ENCODE measurements at regions of chr4 and their contacts with region 1.

Region 1: GRCh38 chr4:102586644-102587021 is 85.5 kb downstream of the NFKB1 start:
- DNase-seq: peak; percentile 60
- H3K4me3 Mint-ChIP-seq: no peak overlapping the region
- H3K27ac Mint-ChIP-seq: peak overlapping the region; percentile 83
- H3K4me1 Mint-ChIP-seq: peaks cover 84% of the 10 kb centered on the region
- H3K27me3 Mint-ChIP-seq: no peaks in the 10 kb centered on the region

Region 2: DNA sequence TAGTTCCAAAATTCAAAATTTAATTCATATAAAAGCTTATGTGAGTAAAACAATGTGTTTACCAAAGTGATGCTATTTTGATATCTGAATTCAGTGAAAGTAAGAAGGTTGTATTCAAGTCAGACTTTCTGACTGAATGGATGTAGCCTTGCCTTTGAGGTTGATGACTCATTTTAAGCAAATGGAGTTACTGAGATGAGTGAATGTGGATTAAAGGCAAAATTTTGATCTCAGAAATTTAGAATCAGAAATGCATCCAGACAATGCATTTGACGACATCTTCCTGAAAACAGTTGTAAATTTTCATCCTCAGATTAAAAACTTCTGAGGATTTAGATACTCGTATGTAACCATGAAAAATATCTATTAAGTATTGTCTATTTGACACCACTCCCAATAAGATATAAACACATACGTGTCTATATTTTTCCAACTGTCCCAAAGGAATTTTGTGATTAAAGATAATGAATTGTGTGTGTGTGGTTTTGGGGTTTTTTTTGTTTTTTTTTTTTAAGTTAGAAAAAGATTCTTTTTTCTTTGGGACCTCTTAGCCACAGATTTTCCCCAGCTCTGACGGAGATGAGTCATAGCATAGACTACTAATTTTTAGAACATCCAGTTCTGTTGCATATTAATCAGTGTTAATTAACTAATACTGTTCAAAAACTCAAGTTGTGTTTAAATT is 51.1 kb before region 1 on chr4:
- CTCF ChIA-PET with region 1: no interaction called
- POLR2A ChIA-PET with region 1: no interaction called
- intact Hi-C with region 1: loop called (anchors 2 kb)
- DNase-seq: no peak
- H3K4me3 Mint-ChIP-seq: no peak overlapping the region
- H3K27ac Mint-ChIP-seq: no peak overlapping the region
- H3K4me1 Mint-ChIP-seq: peaks cover 53% of the 10 kb centered on the region
- H3K27me3 Mint-ChIP-seq: no peaks in the 10 kb centered on the region

Region 3: GRCh38 chr4:102554482-102554881 is 32.2 kb before region 1 on chr4:
- CTCF ChIA-PET with region 1: no interaction called
- POLR2A ChIA-PET with region 1: interaction called, 10 read pairs
- intact Hi-C with region 1: loop called (anchors 5 kb)
- DNase-seq: no peak
- H3K4me3 Mint-ChIP-seq: no peak overlapping the region
- H3K27ac Mint-ChIP-seq: no peak overlapping the region
- H3K4me1 Mint-ChIP-seq: peaks cover 64% of the 10 kb centered on the region
- H3K27me3 Mint-ChIP-seq: no peaks in the 10 kb centered on the region

Region 4: DNA sequence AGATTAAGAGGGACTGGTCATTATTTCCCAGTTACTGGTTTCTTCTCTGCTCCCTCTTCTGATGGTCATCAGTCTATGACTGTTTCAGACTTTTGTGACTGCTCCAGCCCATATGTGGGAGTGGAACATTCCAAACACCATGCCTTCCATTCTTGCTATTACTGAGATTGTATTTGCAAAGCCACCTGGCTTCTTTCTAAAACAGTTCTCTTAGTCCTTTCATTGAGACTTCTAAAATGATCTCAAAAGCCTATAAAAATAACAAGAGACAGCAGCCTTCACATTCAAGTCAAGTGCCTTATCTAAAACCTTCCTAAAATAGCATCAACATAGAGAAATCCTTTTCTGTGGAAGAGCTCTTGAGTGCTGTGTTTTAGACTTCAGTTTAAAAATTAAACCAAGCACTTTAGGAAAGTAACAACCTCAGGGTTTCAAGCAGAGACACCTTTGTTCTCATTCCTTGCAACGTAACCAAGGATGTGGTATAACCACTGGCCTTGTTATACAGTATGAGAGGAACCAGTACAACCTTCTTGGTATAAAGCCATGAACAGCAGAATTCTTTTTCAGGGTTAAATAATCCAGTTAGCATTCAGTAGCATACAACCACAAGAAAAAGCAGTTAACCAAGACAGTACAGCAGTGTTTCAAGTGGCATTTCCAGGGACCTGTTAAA is 11.6 kb after region 1 on chr4:
- CTCF ChIA-PET with region 1: interaction called, 3 read pairs
- POLR2A ChIA-PET with region 1: no interaction called
- intact Hi-C with region 1: loop called (anchors 1 kb)
- DNase-seq: no peak
- H3K4me3 Mint-ChIP-seq: peak overlapping the region; percentile 20
- H3K27ac Mint-ChIP-seq: peak overlapping the region; percentile 89
- H3K4me1 Mint-ChIP-seq: peaks cover 68% of the 10 kb centered on the region
- H3K27me3 Mint-ChIP-seq: no peaks in the 10 kb centered on the region

Region 5: GRCh38 chr4:102610007-102610406 is 23.4 kb after region 1 on chr4:
- CTCF ChIA-PET with region 1: interaction called, 6 read pairs
- POLR2A ChIA-PET with region 1: interaction called, 3 read pairs
- intact Hi-C with region 1: loop called (anchors 1 kb)
- DNase-seq: no peak
- H3K4me3 Mint-ChIP-seq: no peak overlapping the region
- H3K27ac Mint-ChIP-seq: peak overlapping the region; percentile 31
- H3K4me1 Mint-ChIP-seq: peaks cover 86% of the 10 kb centered on the region
- H3K27me3 Mint-ChIP-seq: no peaks in the 10 kb centered on the region

Region 6: GRCh38 chr4:102627831-102628523 is 41.3 kb after region 1 on chr4:
- CTCF ChIA-PET with region 1: no interaction called
- POLR2A ChIA-PET with region 1: no interaction called
- intact Hi-C with region 1: loop called (anchors 1 kb)
- DNase-seq: peak; percentile 37
- H3K4me3 Mint-ChIP-seq: no peak overlapping the region
- H3K27ac Mint-ChIP-seq: peak overlapping the region; percentile 69
- H3K4me1 Mint-ChIP-seq: peaks cover 67% of the 10 kb centered on the region
- H3K27me3 Mint-ChIP-seq: no peaks in the 10 kb centered on the region

Measured in activated CD4-positive, alpha-beta memory T cell treated with anti-CD3 and anti-CD28 coated beads for 36 hours (primary cell).